Aorta (tissue), 5 donors: ENCODE measurements at regions of chr10 and their contacts with region 1.

Region 1: DNA sequence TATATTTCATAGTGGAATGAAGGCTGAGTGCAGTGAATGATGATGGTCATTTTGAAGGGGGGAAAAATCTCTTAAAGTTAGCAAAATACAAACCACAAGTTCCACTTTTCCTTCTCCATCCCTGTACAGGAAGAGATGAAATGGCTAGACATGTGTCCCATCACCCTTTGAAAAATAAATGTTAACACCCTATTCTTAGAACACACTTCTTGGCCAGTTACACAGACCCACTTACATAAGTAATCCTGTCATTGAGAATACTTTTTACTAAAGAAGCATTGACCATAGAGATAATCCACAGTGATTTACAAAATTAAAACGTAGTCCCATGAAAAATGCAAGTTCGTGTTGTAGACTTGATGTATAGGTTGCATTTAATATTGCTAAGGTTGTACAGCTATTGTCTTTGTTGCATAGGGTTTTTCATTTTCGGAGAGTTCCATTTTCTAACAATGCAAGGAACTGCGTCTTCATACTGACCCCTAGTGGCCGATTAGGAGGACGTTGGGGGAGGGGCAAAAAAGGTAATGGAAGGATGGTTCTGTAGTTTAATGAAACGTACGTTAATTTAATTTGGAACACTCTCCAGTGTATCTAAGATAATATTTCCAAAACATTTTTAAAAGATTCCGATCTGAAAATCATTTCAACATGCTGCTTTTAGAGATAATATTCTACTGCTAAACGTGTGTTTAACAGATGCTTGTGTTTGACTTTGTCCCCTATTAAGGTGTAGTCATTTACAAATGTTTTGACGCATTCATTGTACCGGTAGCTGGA is 60.9 kb downstream of the ARMC3 start:
- DNase-seq: peak in 1 of 2 donors; percentile 46
- ATAC-seq: peak; percentile 88
- H3K4me3 ChIP-seq: no peak overlapping the region
- H3K27ac ChIP-seq: no peak overlapping the region
- H3K4me1 ChIP-seq: no peaks in the 10 kb centered on the region
- H3K27me3 ChIP-seq: peaks cover 0 to 1% of the 10 kb centered on the region in 2 donors

Region 2: GRCh38 chr10:21078410-21079329 is 1910.1 kb before region 1 on chr10:
- intact Hi-C with region 1: loop called in 1 of 2 experiments (anchors 5 kb)
- DNase-seq: peak in 1 of 2 donors; percentile 54
- ATAC-seq: peak; percentile 74
- H3K4me3 ChIP-seq: no peak overlapping the region
- H3K27ac ChIP-seq: no peak overlapping the region
- H3K4me1 ChIP-seq: no peaks in the 10 kb centered on the region
- H3K27me3 ChIP-seq: no peaks in the 10 kb centered on the region

Region 3: GRCh38 chr10:22340362-22341189 is 648.2 kb before region 1 on chr10:
- intact Hi-C with region 1: loop called in 1 of 2 experiments (anchors 2 kb)
- DNase-seq: peak; percentile 81 to 90
- ATAC-seq: peak; percentile 90
- H3K4me3 ChIP-seq: peak overlapping the region; percentile 83 to 94
- H3K27ac ChIP-seq: peak overlapping the region; percentile 73 to 77
- H3K4me1 ChIP-seq: no peaks in the 10 kb centered on the region
- H3K27me3 ChIP-seq: peaks cover 0 to 2% of the 10 kb centered on the region in 2 donors

Region 4: GRCh38 chr10:22550732-22551131 is 438.0 kb before region 1 on chr10:
- intact Hi-C with region 1: loop called in 1 of 2 experiments (anchors 10 kb)
- DNase-seq: peak in 1 of 2 donors; percentile 82
- ATAC-seq: no peak
- H3K4me3 ChIP-seq: no peak overlapping the region
- H3K27ac ChIP-seq: no peak overlapping the region
- H3K4me1 ChIP-seq: peaks cover 2 to 3% of the 10 kb centered on the region in 2 donors
- H3K27me3 ChIP-seq: no peaks in the 10 kb centered on the region

Region 5: GRCh38 chr10:22714479-22715289 is 274.1 kb before region 1 on chr10 and contains the start of gene PIP4K2A:
- intact Hi-C with region 1: loop called in 1 of 2 experiments (anchors 10 kb)
- DNase-seq: peak; percentile 86 to 91
- ATAC-seq: peak; percentile 85
- H3K4me3 ChIP-seq: peak within 1 kb of the TSS; percentile 73 to 96
- H3K27ac ChIP-seq: peak within 1 kb of the TSS; percentile 52 to 91
- H3K4me1 ChIP-seq: peaks cover 0 to 3% of the 10 kb centered on the region in 2 donors
- H3K27me3 ChIP-seq: no peaks in the 10 kb centered on the region
- total RNA-seq, gene PIP4K2A: 77.9 to 90.3 TPM

Region 6: DNA sequence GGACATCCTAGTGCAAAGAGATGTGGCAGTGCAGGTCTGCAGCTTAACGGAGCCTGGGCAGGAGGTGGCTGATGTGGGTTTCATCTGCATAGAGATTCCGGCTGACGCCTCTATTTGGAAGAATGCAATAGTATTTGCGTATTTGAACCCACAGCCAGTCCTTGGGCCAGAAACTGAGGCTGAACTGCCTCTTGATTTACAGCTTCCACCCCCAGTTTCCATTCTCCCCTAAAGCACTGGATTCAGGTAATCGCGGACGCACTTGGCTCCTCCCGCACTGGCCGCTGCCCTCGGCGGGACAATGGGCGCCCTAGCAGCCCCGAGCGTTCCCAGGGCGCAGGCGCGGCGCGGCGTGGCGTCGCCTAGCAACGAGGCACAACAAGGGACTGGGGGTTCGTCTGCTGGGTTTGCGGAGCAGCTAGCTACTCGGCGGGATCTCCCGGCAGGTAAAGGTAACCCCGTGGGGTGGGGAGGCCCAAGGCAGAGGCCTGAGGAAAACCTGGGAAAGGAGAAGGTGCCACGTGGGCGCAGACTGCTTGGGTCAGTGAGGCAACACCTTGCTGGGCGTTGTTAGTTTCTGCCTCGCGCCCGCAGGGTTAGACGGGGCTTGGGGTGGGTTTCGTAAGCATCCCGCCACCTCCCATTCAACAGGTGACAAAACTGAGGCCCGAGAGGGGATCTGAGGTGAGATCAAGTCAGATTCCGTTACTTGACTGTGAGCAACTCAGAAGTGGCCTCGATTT is 60.9 kb before region 1 on chr10 and contains the start of gene ARMC3:
- intact Hi-C with region 1: no loop called
- DNase-seq: peak; percentile 76 to 88
- ATAC-seq: peak; percentile 83
- H3K4me3 ChIP-seq: peak within 1 kb of the TSS in 1 of 2 donors; percentile 12
- H3K27ac ChIP-seq: no peak within 1 kb of the TSS
- H3K4me1 ChIP-seq: peaks cover 0 to under 1% of the 10 kb centered on the region in 2 donors
- H3K27me3 ChIP-seq: no peaks in the 10 kb centered on the region
- total RNA-seq, gene ARMC3: not detected

Region 7: GRCh38 chr10:23053036-23053435 is 64.3 kb after region 1 on chr10:
- intact Hi-C with region 1: no loop called
- DNase-seq: no peak
- ATAC-seq: no peak
- H3K4me3 ChIP-seq: no peak overlapping the region
- H3K27ac ChIP-seq: no peak overlapping the region
- H3K4me1 ChIP-seq: peaks cover 0 to 2% of the 10 kb centered on the region in 2 donors
- H3K27me3 ChIP-seq: no peaks in the 10 kb centered on the region